Adrenal gland (tissue), 19 donors: ENCODE measurements at regions of chr12 and their contacts with region 1.

Region 1: GRCh38 chr12:50960130-50960529 is 7.8 kb downstream of the HIGD1C start:
- DNase-seq: no peak
- H3K4me3 ChIP-seq: no peak overlapping the region
- H3K27ac ChIP-seq: no peak overlapping the region
- H3K4me1 ChIP-seq: no peaks in the 10 kb centered on the region
- H3K27me3 ChIP-seq: no peaks in the 10 kb centered on the region
- CTCF ChIP-seq: no peak
- POLR2A ChIP-seq: no peak

Region 2: DNA sequence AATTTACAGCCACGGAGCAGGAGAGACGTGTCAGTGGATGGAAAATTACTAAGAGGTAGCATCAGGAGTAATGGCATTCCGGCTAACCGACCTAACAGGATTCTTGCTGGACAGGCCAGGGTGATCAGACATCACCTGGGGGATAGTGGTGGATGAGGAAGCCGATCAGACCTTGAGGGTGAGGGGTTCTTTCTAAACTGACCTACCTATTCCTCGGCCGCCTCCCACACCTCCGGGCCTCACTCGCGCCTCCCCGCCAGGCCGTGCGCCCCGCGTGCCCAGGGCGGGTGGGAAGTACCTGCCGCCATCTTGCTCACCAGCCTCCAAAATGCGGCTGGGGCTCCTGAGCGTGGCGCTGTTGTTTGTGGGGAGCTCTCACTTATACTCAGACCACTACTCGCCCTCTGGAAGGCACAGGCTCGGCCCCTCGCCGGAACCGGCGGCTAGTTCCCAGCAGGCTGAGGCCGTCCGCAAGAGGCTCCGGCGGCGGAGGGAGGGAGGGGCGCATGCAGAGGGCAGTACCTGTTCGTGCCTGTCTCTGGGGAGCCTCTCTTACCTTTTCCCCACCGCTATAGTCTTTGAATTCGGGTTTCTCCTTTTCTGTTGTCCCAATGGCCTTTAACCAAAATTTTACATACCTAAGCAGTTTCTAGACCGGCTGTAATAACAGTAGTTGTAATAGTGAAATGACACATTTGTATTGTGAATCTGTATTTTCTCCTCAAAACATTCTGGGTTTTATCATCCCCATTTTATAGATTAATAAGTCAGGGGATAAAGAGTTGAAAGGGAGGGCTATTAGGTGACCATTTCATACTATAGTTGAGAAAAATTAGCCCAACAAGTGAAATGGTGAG is 117.3 kb before region 1 on chr12 and contains the start of gene TMPRSS12:
- intact Hi-C with region 1: loop called in 1 of 2 experiments (anchors 10 kb)
- DNase-seq: peak; percentile 48 to 70 (median 64)
- H3K4me3 ChIP-seq: peak within 1 kb of the TSS in 2 of 4 donors; percentile 1 to 42
- H3K27ac ChIP-seq: peak within 1 kb of the TSS in 4 of 5 donors; percentile 14 to 67 (median 61)
- H3K4me1 ChIP-seq: no peaks in the 10 kb centered on the region
- H3K27me3 ChIP-seq: no peaks in the 10 kb centered on the region
- CTCF ChIP-seq: peak in 1 of 6 experiments; percentile 19
- POLR2A ChIP-seq: peak in 1 of 2 donors; percentile 37
- total RNA-seq, gene TMPRSS12: 0.39 TPM in 1 of 9 donors, not detected in the others

Region 3: GRCh38 chr12:51000245-51000644 is 40.1 kb after region 1 on chr12:
- intact Hi-C with region 1: no loop called
- DNase-seq: no peak
- H3K4me3 ChIP-seq: no peak overlapping the region
- H3K27ac ChIP-seq: no peak overlapping the region
- H3K4me1 ChIP-seq: peaks cover 0 to 6% of the 10 kb centered on the region in 2 donors
- H3K27me3 ChIP-seq: no peaks in the 10 kb centered on the region
- CTCF ChIP-seq: no peak
- POLR2A ChIP-seq: no peak